Head of caudate nucleus (tissue), 42 donors: ENCODE measurements at regions of chr4 and their contacts with region 1.

Region 1: DNA sequence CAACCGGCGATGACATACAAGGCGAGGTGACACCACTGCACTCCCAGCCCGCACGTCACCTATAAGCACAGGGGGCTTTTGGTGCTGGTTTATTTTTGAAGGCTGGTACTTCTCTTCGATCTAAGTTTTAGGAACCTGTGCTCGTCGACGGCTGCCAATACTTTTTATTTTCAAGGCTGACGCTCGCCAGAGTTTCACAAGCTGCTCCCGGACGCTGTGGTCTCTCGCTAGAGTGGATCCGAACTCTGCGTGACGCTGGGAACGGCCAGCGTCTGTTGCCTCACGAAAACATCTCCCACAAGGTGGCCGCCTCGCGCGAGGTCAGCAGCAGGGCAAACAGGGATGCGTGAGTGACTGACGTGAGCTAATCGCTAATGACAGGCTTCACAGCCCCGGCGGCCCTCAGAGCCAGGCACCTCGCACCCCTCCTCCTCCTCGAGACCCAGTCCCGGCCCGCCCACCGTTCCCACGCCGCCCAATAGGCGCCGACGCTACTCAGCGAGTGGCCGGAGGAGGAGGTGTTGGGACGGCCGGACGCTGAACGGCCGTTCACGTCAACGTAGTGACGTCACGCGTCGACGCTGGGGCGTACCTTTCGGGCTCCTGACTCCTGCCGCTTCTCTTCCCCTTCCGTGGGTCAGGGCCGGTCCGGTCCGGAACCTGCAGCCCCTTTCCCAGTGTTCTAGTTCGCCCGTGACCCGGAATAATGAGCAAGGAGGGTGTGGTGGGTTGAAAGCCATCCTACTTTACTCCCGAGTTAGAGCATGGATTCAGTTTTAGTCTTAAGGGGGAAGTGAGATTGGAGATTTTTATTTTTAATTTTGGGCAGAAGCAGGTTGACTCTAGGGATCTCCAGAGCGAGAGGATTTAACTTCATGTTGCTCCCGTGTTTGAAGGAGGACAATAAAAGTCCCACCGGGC is at the start of gene CLCN3:
- DNase-seq: peak; percentile 92 to 99 (median 97)

Region 2: GRCh38 chr4:170089668-170090351 is 469.6 kb after region 1 on chr4 and contains the start of gene AADAT:
- intact Hi-C with region 1: loop called (anchors 10 kb)
- DNase-seq: peak; percentile 62 to 94 (median 85)